ENCODE measurements at regions of chr17 and their contacts with region 1.

Region 1: DNA sequence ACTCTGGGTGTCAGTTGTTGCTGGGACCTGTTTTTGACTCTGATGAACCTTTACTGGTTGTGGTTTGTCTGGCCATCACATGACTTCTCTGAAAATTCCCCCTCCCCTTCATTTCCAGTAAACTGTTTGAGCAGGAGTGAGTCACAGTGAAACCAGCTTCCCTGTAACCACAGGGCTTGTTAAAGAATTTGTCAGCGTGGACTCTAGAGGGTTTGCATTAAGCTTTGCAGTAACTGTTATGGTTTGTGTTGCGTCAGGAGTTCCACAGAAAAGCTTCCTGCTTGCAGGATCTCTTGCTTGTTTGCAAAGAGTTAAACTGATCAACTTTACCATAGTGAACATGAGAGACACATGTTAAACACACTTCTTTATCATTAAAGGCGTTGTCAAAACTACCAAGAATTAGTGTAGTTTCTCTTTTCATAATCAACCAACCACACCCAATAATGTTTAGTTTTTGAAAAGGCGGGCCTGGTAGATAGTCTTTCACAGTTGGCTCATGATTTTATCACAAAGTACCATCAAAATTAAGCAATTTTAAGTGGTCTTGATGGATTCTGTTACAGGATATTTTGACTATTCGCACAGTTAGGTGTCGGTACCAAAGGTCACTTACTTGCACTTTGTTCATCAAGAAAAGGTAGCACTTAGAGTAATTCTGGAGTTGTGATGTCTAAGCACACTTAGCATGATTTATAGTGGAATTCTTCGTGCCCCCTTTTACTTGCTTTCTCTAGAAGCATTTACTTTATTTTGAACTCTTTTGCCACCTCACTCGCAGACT is 79.3 kb downstream of the VMP1 start:
- DNase-seq: peak; percentile 73
- H3K4me3 Mint-ChIP-seq: peak overlapping the region; percentile 24
- H3K27ac Mint-ChIP-seq: peak overlapping the region; percentile 92
- H3K4me1 Mint-ChIP-seq: peaks cover 26% of the 10 kb centered on the region
- H3K27me3 Mint-ChIP-seq: no peaks in the 10 kb centered on the region
- CTCF ChIP-seq: no peak

Region 2: DNA sequence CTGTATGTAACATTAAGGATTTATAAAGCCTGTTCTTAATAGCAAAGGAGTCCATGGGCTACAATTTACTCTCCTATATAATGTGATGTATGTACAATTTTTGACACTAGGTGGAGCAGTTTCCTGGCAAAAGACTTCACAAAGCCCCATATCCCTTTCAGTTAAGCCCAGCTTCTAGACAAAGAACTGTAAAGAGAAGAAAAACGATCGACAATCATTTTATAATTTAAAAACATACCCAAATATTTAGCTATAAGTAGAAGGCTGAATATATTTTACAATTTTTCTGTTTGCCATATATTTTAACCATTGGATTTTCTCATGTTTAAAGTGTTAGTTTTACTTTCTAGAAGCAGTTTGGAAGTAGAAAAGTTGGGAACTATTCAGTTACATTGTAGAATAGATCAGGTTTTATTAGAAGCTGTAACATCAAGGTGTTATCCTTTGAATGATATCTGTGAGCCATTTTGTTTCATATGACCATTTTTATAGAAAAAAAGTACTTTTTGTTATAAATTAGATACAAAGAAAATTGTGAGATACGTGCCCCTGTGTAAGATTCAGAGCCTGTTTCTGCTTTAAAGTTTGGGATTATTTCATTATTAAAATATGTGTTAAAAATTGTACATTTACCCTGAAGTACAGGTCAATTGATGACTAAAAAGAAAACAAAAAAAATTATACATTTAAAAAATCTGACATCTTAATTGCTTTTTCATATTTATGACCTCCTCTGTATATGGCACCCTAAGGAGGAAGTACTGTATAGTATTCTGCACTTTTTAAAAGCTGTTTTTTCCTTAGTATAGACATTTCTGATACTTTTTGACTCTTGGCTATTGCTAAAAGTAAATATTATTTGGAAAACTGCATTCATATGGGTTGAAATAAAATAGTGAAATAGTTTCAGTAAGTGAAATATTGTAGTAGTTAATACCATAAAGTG is 32.9 kb before region 1 on chr17:
- CTCF ChIA-PET with region 1: interaction called, 4 read pairs
- intact Hi-C with region 1: loop called (anchors 1 kb)
- DNase-seq: peak; percentile 21
- H3K4me3 Mint-ChIP-seq: peak overlapping the region; percentile 43
- H3K27ac Mint-ChIP-seq: peak overlapping the region; percentile 96
- H3K4me1 Mint-ChIP-seq: peaks cover 17% of the 10 kb centered on the region
- H3K27me3 Mint-ChIP-seq: no peaks in the 10 kb centered on the region
- CTCF ChIP-seq: peak; percentile 44

Region 3: DNA sequence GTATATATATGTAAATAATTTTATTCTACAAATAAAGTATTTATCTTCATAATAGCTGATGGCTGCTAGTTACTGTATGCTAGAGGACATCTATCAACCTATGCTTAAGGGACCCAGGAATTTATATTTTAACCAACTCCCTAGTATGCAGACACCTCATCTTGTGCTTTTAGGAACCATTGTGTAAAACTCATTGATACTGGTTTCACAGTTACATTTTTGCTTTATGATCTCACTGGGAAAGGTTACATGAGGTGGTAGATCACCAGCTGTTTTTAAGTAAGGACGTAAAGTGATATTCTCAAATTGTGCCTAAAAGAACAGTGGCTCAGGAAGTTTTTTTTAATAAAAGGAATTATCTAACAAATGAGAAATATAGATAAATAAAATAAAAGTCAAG is 22.9 kb before region 1 on chr17:
- CTCF ChIA-PET with region 1: no interaction called
- intact Hi-C with region 1: no loop called
- DNase-seq: no peak
- H3K4me3 Mint-ChIP-seq: no peak overlapping the region
- H3K27ac Mint-ChIP-seq: no peak overlapping the region
- H3K4me1 Mint-ChIP-seq: peaks cover 9% of the 10 kb centered on the region
- H3K27me3 Mint-ChIP-seq: no peaks in the 10 kb centered on the region
- CTCF ChIP-seq: no peak

Region 4: GRCh38 chr17:59807892-59808509 is 21.3 kb after region 1 on chr17:
- CTCF ChIA-PET with region 1: no interaction called
- intact Hi-C with region 1: loop called (anchors 1 kb)
- DNase-seq: no peak
- H3K4me3 Mint-ChIP-seq: no peak overlapping the region
- H3K27ac Mint-ChIP-seq: peak overlapping the region; percentile 67
- H3K4me1 Mint-ChIP-seq: peaks cover 10% of the 10 kb centered on the region
- H3K27me3 Mint-ChIP-seq: no peaks in the 10 kb centered on the region
- CTCF ChIP-seq: no peak

Region 5: DNA sequence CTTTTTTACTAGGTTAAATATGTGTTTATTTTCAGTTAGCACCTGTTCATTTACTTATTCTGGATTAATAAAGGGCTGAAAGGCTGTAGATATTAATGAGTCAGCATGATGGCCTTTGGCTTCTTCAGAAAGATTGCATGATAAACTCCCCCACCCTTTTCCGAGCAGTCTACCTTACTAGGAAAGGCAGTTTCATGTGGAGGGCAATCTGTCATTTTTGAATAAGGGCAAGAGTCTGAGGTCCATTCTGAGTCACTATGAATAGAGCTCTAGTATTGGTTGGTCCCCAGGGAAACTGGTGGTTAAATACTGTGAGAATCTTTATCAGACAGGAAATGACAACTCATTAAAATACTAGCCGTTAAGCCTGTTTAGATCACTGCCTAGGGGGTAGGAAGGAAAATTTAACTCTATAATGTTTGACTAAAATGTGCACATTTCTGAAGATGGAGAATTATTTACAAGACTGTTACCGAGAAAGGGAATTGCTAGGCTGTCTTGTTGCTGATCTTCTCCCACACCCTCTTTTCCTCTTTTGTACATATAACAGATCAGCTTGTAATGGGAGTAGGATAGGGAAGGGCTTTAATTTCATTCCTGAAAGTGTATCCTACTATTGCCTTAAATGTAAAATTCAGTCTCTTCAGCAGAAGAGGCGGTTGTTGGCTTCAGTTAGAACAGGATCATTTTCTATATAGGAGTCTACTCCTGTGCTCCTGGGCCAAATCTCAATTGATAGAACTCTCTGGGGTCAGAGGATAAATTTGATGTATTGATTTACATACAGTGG is 42.7 kb after region 1 on chr17:
- CTCF ChIA-PET with region 1: interaction called, 9 read pairs
- intact Hi-C with region 1: loop called (anchors 1 kb)
- DNase-seq: peak; percentile 68
- H3K4me3 Mint-ChIP-seq: peak overlapping the region; percentile 49
- H3K27ac Mint-ChIP-seq: peak overlapping the region; percentile 97
- H3K4me1 Mint-ChIP-seq: peaks cover 16% of the 10 kb centered on the region
- H3K27me3 Mint-ChIP-seq: no peaks in the 10 kb centered on the region
- CTCF ChIP-seq: no peak

Region 6: GRCh38 chr17:59837308-59838051 is 50.8 kb after region 1 on chr17:
- CTCF ChIA-PET with region 1: interaction called, 6 read pairs
- intact Hi-C with region 1: loop called (anchors 1 kb)
- DNase-seq: peak; percentile 77
- H3K4me3 Mint-ChIP-seq: peak overlapping the region; percentile 69
- H3K27ac Mint-ChIP-seq: peak overlapping the region; percentile 100
- H3K4me1 Mint-ChIP-seq: peaks cover 8% of the 10 kb centered on the region
- H3K27me3 Mint-ChIP-seq: no peaks in the 10 kb centered on the region
- CTCF ChIP-seq: no peak

Region 7: GRCh38 chr17:59853168-59853918 is 66.6 kb after region 1 on chr17:
- CTCF ChIA-PET with region 1: interaction called, 5 read pairs
- intact Hi-C with region 1: loop called (anchors 2 kb)
- DNase-seq: peak; percentile 85
- H3K4me3 Mint-ChIP-seq: peak overlapping the region; percentile 20
- H3K27ac Mint-ChIP-seq: peak overlapping the region; percentile 78
- H3K4me1 Mint-ChIP-seq: peaks cover 47% of the 10 kb centered on the region
- H3K27me3 Mint-ChIP-seq: no peaks in the 10 kb centered on the region
- CTCF ChIP-seq: peak; percentile 66